Caco-2 (cell line): ENCODE measurements at regions of chr14 and their contacts with region 1.

Region 1: GRCh38 chr14:75126679-75127473 is at the start of gene NEK9:
- DNase-seq: peak; percentile 91 to 93
- H3K4me3 ChIP-seq: peak within 1 kb of the TSS; percentile 96
- H3K4me3 Mint-ChIP-seq: peak within 1 kb of the TSS; percentile 80
- H3K27ac Mint-ChIP-seq: peak within 1 kb of the TSS; percentile 86
- H3K4me1 ChIP-seq: peaks cover 16% of the 10 kb centered on the region; the same call in 1 of the 2 replicates
- H3K4me1 Mint-ChIP-seq: no peaks in the 10 kb centered on the region
- H3K27me3 ChIP-seq: no peaks in the 10 kb centered on the region
- H3K27me3 Mint-ChIP-seq: no peaks in the 10 kb centered on the region
- CTCF ChIP-seq: no peak
- total RNA-seq, gene NEK9: 64.0 and 69.2 TPM in 2 replicates

Region 2: DNA sequence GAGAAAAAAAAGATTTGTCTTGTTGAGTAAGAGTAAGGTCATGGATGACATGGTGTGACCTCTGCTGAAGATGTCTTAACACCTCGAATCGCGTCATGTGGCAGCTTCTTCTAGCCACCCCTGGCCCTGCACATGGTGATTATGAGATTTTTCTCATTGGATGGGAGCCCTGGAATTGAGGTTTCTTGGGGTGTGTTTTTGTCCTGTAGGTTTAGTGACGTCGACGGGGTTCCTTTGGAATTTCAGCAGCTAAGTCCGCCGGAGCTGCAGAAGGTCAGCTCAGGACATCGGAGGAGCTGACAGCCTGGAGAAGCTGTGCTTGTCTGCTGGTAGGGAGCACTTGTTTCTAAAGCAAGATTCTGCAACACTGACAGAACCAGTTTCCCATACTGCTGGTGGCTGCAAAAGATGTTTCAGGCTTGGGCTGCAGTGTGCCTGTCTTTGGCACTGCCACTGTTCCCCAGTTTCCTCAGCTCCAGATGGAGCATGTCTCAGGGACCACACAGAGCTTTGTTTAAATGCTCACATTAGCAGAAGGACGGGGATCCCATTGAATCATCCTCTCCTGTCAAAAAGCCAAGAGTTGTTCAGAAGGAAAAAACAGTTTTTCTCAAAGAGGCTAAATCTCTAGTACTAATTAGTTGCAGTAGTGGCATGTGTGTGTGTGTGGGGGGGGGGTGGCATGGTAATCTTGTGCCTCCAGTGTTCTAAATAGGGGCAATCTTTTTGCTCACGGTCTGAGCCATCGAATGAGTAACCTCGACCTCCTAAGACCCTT is 146.6 kb after region 1 on chr14:
- CTCF ChIA-PET with region 1: no interaction called
- POLR2A ChIA-PET with region 1: interaction called, 13 read pairs
- intact Hi-C with region 1: no loop called
- DNase-seq: no peak
- H3K4me3 ChIP-seq: no peak overlapping the region
- H3K4me3 Mint-ChIP-seq: no peak overlapping the region
- H3K27ac Mint-ChIP-seq: no peak overlapping the region
- H3K4me1 ChIP-seq: no peaks in the 10 kb centered on the region
- H3K4me1 Mint-ChIP-seq: peaks cover 6% of the 10 kb centered on the region
- H3K27me3 ChIP-seq: no peaks in the 10 kb centered on the region
- H3K27me3 Mint-ChIP-seq: no peaks in the 10 kb centered on the region
- CTCF ChIP-seq: no peak